ENCODE measurements at regions of chr20 and their contacts with region 1.

Region 1: DNA sequence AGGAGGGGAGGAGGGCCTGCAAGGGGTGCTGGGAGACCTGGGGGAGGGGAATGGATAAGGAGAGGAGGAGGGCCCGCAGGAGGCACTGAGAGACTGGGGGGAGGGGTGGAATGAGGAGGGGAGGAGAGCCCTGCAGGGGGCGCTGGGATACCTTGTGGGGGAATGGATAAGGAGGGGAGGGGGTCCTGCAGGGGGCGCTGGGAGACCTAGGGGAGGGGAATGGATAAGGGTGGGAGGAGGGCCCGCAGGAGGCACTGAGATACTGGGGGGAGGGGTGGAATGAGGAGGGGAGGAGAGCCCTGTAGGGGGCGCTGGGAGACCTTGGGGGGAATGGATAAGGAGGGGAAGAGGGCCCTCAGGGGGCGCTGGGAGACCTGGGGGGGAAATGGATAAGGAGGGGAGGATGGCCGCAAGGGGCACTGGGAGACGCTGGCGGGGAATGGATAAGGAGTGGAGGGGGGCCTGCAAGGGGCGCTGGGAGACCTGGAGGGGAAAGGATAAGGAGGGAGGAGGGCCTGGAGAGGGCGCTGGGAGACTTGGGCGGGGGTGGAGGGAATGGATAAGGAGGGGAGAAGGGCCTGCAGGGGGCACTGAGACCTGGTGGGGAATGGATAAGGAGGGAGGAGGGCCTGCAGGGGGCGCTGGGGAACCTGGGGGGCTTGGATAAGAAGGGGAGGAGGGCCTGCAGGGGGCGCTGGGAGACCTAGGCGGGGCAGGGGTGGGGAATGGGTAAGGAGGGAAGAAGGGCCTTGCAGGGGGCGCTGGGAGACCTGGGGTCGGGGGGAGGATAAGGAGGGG is 1.3 kb upstream of the CTCFL start:
- DNase-seq: no peak
- H3K4me3 ChIP-seq: no peak overlapping the region
- H3K27ac ChIP-seq: no peak overlapping the region
- H3K4me1 ChIP-seq: no peaks in the 10 kb centered on the region
- H3K27me3 ChIP-seq: no peaks in the 10 kb centered on the region
- CTCF ChIP-seq: peak in 1 of 4 experiments; percentile 3
- POLR2A ChIP-seq: no peak

Region 2: GRCh38 chr20:57514273-57514751 is 12.0 kb before region 1 on chr20:
- intact Hi-C with region 1: no loop called
- DNase-seq: peak; percentile 71 to 78
- H3K4me3 ChIP-seq: no peak overlapping the region
- H3K27ac ChIP-seq: no peak overlapping the region
- H3K4me1 ChIP-seq: no peaks in the 10 kb centered on the region
- H3K27me3 ChIP-seq: no peaks in the 10 kb centered on the region
- CTCF ChIP-seq: peak; percentile 79 to 92 (median 88)
- POLR2A ChIP-seq: no peak

Region 3: DNA sequence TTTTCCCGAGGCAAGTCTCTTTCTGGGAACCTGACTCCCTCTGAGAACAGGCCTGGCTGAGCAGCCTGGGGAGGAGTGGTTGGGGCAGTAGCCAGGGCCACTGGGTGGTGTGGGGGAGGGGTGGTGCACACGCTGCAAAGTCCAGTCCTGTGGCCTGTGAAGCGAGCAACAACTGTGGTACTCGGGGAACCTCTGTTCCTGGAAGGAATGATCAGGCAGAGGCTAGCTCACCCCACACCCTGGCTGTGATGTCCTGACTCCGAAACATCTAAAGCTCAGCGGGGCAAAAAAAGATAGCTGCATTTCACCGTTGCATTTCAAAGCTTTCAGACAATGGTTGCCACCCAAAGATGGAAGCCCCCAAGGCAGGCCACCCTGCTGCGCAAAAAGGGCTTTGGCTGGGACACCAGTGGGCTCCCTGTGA is 60.1 kb after region 1 on chr20:
- intact Hi-C with region 1: loop called (anchors 5 kb)
- DNase-seq: no peak
- H3K4me3 ChIP-seq: no peak overlapping the region
- H3K27ac ChIP-seq: no peak overlapping the region
- H3K4me1 ChIP-seq: peaks cover under 1 to 7% of the 10 kb centered on the region in 2 donors
- H3K27me3 ChIP-seq: no peaks in the 10 kb centered on the region
- CTCF ChIP-seq: no peak
- POLR2A ChIP-seq: no peak

Measured in uterus (tissue), 4 donors.